Esophagus muscularis mucosa (tissue), 4 donors: ENCODE measurements at regions of chr17 and their contacts with region 1.

Region 1: GRCh38 chr17:73192894-73193701 is at the start of gene COG1:
- DNase-seq: peak; percentile 96
- H3K4me3 ChIP-seq: peak within 1 kb of the TSS; percentile 82 to 99 (median 92)
- H3K27ac ChIP-seq: peak within 1 kb of the TSS; percentile 80 to 93 (median 90)
- H3K4me1 ChIP-seq: peaks cover 15 to 45% (median 31%) of the 10 kb centered on the region in 4 donors
- H3K27me3 ChIP-seq: no peaks in the 10 kb centered on the region
- CTCF ChIP-seq: no peak
- EP300 ChIP-seq: no peak
- POLR2A ChIP-seq: no peak
- total RNA-seq, gene COG1: 19.1 to 36.5 (median 27.3) TPM

Region 2: DNA sequence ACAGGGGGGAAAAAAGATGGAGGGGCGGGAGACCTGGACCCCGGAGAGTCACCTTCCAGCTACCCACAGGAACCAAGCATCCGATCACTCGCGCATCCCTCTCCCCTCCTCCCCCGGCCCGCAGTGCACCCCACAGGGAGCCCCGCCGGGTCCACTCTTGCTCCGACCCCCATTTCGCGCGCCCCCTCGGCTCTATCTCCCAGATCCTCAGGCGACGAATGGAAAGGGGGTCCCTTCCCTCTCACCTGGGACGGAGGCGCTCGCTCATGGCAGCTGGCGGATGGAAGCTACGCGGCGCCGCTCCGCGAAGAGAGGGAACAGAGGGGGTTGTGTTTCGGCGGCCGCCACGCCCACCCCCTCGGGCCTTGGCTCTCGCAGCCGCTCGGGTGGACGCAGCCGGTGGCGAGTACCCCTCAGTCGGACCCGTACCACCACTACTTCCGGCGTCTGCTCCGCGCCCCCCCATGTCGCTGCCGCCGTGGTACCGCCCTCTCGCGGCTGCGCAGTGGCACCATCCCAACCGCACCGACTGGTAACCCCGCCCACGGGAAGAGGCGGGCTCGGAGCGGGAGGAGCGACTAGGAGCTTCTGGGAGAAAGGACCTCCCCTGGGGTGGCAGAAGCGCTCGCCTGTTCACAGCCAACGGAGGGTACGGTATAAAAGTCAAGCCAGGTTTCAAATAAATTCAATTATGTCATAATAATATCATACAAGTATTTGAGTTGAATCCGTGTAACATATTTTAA is 38.9 kb after region 1 on chr17:
- intact Hi-C with region 1: loop called (anchors 1 kb)
- DNase-seq: peak; percentile 97
- H3K4me3 ChIP-seq: peak overlapping the region; percentile 71 to 97 (median 82)
- H3K27ac ChIP-seq: peak overlapping the region; percentile 82 to 90 (median 86)
- H3K4me1 ChIP-seq: peaks cover 41 to 60% (median 57%) of the 10 kb centered on the region in 4 donors
- H3K27me3 ChIP-seq: no peaks in the 10 kb centered on the region
- CTCF ChIP-seq: peak; percentile 27 to 50 (median 37)
- EP300 ChIP-seq: no peak
- POLR2A ChIP-seq: peak; percentile 61

Region 3: GRCh38 chr17:73278465-73279453 is 85.7 kb after region 1 on chr17:
- intact Hi-C with region 1: no loop called
- DNase-seq: no peak
- H3K4me3 ChIP-seq: peak overlapping the region in 3 of 4 donors; percentile 3 to 5 (median 4)
- H3K27ac ChIP-seq: peak overlapping the region; percentile 74 to 85 (median 80)
- H3K4me1 ChIP-seq: peaks cover 38 to 58% (median 43%) of the 10 kb centered on the region in 4 donors
- H3K27me3 ChIP-seq: no peaks in the 10 kb centered on the region
- CTCF ChIP-seq: no peak
- EP300 ChIP-seq: no peak
- POLR2A ChIP-seq: no peak

Region 4: DNA sequence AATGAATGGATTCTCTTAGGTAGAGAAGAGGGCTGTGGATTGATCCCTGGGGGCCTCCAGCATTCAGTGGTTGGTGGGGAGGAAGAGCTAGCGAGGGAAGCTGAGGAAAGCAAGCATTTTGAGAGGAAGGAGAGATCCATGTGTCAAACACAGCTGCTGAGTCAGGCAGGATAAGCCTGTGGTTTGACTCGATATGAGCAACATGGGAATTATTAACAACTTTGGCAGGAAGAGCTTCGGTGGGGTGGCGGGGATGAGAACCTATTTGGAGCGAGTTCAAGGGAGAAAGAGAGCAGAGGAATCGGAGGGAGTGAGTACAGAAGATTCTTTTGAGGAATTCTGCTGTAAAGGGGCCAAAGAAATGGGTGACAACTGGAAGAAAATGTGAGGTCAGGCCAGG is 178.2 kb after region 1 on chr17:
- intact Hi-C with region 1: loop called (anchors 10 kb)
- DNase-seq: no peak
- H3K4me3 ChIP-seq: no peak overlapping the region
- H3K27ac ChIP-seq: no peak overlapping the region
- H3K4me1 ChIP-seq: peaks cover 0 to 13% (median 4%) of the 10 kb centered on the region in 4 donors
- H3K27me3 ChIP-seq: peaks cover 0 to 9% (median 0%) of the 10 kb centered on the region in 4 donors
- CTCF ChIP-seq: no peak
- EP300 ChIP-seq: no peak
- POLR2A ChIP-seq: no peak